AG04449 (cell line): ENCODE measurements at regions of chr1 and their contacts with region 1.

Region 1: GRCh38 chr1:222465211-222466041 is 82.5 kb downstream of the HHIPL2 start:
- DNase-seq: peak; percentile 63
- H3K4me3 ChIP-seq: peak overlapping the region; percentile 59
- CTCF ChIP-seq: peak; percentile 94

Region 2: DNA sequence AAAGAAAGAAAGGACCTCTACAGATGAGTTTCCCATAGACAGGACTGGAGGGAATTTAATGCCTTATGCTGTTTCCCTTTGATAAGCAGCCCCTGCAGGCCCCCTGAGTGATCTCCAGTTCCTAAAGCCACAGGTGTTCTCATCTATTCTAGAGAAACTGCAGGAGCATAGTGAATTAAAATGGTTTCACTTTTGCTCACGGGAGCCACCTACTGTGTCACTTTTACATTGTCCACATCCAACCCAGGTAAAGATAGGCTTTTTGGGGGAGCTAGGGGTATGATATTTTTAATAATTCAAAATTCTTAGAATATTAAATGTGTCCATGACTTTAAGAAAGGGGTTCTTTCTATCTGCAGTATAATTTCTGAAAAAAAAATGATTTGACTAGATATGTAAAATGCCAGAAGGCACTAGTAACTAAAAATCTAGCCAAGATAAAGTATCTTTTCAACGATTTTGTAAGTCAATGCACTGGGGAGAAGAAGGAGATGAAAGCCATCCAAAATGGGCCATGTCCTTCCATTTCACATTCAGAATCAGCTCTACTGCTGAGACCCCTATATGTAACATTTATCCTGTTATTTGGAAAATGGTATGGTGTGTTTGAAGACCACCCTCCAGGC is 456.2 kb before region 1 on chr1:
- CTCF ChIA-PET with region 1: no interaction called
- POLR2A ChIA-PET with region 1: no interaction called
- DNase-seq: no peak
- H3K4me3 ChIP-seq: no peak overlapping the region
- CTCF ChIP-seq: peak; percentile 13

Region 3: DNA sequence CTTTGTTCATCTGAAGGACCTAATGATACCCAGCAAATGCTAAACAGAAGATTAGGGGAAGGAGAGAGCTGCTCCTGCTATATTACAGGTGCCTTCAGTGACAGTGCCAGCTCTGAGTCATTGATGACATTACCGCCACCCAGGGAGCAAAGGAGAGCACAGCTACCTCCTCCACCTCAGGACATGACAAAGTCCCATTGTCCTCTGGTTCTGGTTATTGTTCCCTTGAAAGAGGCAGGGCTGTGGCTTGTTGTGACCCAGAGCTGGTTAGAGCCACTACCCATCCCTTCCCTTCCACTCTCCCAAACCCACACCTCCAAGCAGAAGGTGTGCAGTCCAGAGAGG is 360.1 kb before region 1 on chr1:
- CTCF ChIA-PET with region 1: no interaction called
- POLR2A ChIA-PET with region 1: no interaction called
- DNase-seq: no peak
- H3K4me3 ChIP-seq: no peak overlapping the region
- CTCF ChIP-seq: no peak

Region 4: GRCh38 chr1:222624214-222624613 is 158.8 kb after region 1 on chr1:
- CTCF ChIA-PET with region 1: interaction called, 18 read pairs
- POLR2A ChIA-PET with region 1: no interaction called
- DNase-seq: no peak
- H3K4me3 ChIP-seq: no peak overlapping the region
- CTCF ChIP-seq: no peak

Region 5: GRCh38 chr1:222634180-222635013 is 169.0 kb after region 1 on chr1:
- CTCF ChIA-PET with region 1: interaction called, 179 read pairs
- POLR2A ChIA-PET with region 1: interaction called, 3 read pairs
- DNase-seq: peak; percentile 65
- H3K4me3 ChIP-seq: no peak overlapping the region
- CTCF ChIP-seq: peak; percentile 68

Region 6: GRCh38 chr1:222643938-222644635 is 178.7 kb after region 1 on chr1:
- CTCF ChIA-PET with region 1: interaction called, 27 read pairs
- POLR2A ChIA-PET with region 1: interaction called, 3 read pairs
- DNase-seq: peak; percentile 88
- H3K4me3 ChIP-seq: peak overlapping the region; percentile 72
- CTCF ChIP-seq: no peak